ENCODE measurements at regions of chr18 and their contacts with region 1.

Region 1: GRCh38 chr18:47204908-47205522 is 28.9 kb upstream of the IER3IP1 start:
- DNase-seq: peak in 7 of 9 donors; percentile 9 to 49 (median 34)
- ATAC-seq: no peak
- H3K4me3 ChIP-seq: no peak overlapping the region
- H3K4me3 Mint-ChIP-seq: no peak overlapping the region
- H3K27ac ChIP-seq: no peak overlapping the region
- H3K27ac Mint-ChIP-seq: no peak overlapping the region
- H3K4me1 ChIP-seq: no peaks in the 10 kb centered on the region
- H3K4me1 Mint-ChIP-seq: peaks cover 0 to 2% (median 0%) of the 10 kb centered on the region in 7 donors
- H3K27me3 ChIP-seq: no peaks in the 10 kb centered on the region
- H3K27me3 Mint-ChIP-seq: peaks cover 14 to 55% (median 28%) of the 10 kb centered on the region in 5 donors

Region 2: GRCh38 chr18:47050468-47050867 is 154.5 kb before region 1 on chr18:
- CTCF ChIA-PET with region 1: interaction called, 13 read pairs
- POLR2A ChIA-PET with region 1: no interaction called
- intact Hi-C with region 1: loop called (anchors 1 kb)
- DNase-seq: peak in 5 of 9 donors; percentile 3 to 13 (median 8)
- ATAC-seq: no peak
- H3K4me3 ChIP-seq: no peak overlapping the region
- H3K4me3 Mint-ChIP-seq: no peak overlapping the region
- H3K27ac ChIP-seq: no peak overlapping the region
- H3K27ac Mint-ChIP-seq: no peak overlapping the region
- H3K4me1 ChIP-seq: no peaks in the 10 kb centered on the region
- H3K4me1 Mint-ChIP-seq: peaks cover 0 to 5% (median 0%) of the 10 kb centered on the region in 7 donors
- H3K27me3 ChIP-seq: no peaks in the 10 kb centered on the region
- H3K27me3 Mint-ChIP-seq: peaks cover 0 to 8% (median 4%) of the 10 kb centered on the region in 5 donors

Measured in naive thymus-derived CD4-positive, alpha-beta T cell (primary cell).